Right ventricle myocardium superior (tissue), 1 donor: ENCODE measurements at regions of chr9 and their contacts with region 1.

Region 1: GRCh38 chr9:132260846-132261245 is 93.9 kb downstream of the SETX start:
- DNase-seq: no peak
- ATAC-seq: no peak

Region 2: DNA sequence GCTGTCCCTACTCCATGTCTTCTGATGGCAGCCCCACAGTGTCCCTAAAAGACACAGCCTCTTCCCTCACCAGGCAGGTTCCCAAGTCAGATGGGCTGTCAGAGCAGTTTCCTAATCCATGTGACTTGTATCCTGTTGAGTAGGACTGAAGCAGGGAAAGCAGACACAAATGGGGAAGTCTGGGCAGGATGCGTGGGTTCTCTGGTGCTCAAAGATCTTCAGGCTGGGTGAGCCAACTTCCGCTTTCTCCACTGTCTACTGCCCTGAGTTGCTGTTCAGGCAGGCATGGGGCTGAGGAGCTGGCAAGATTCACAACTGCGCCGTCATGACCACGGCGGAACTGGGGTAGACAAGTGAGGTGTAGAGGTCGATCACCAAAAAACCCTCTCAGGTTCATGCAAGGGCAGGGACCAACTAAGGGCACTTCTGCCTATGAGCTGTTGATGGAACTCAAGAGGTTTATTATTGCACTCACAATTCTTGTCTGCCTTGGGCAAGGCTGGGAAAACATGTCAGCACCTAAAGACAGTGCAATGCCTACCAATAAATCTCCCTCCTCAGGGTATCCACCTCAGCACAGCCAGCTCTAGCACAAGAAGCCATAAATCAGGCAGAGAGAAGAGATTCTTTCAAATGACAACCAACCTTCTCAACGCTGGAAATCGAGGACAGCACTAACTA is 604.4 kb before region 1 on chr9:
- intact Hi-C with region 1: no loop called
- DNase-seq: peak; percentile 83
- ATAC-seq: peak; percentile 71

Region 3: GRCh38 chr9:131755541-131756198 is 505.2 kb before region 1 on chr9:
- intact Hi-C with region 1: loop called (anchors 5 kb)
- DNase-seq: peak; percentile 87
- ATAC-seq: peak; percentile 92